ENCODE measurements at regions of chr6 and their contacts with region 1.

Region 1: GRCh38 chr6:31827286-31828079 is at the start of gene HSPA1B:
- DNase-seq: peak; percentile 99
- ATAC-seq: peak; percentile 78
- H3K4me3 Mint-ChIP-seq: peak within 1 kb of the TSS; percentile 86
- H3K27ac Mint-ChIP-seq: peak within 1 kb of the TSS; percentile 93
- H3K4me1 Mint-ChIP-seq: peaks cover 53% of the 10 kb centered on the region
- H3K27me3 Mint-ChIP-seq: no peaks in the 10 kb centered on the region
- total RNA-seq, gene HSPA1B: 84.6 to 87.1 TPM

Region 2: DNA sequence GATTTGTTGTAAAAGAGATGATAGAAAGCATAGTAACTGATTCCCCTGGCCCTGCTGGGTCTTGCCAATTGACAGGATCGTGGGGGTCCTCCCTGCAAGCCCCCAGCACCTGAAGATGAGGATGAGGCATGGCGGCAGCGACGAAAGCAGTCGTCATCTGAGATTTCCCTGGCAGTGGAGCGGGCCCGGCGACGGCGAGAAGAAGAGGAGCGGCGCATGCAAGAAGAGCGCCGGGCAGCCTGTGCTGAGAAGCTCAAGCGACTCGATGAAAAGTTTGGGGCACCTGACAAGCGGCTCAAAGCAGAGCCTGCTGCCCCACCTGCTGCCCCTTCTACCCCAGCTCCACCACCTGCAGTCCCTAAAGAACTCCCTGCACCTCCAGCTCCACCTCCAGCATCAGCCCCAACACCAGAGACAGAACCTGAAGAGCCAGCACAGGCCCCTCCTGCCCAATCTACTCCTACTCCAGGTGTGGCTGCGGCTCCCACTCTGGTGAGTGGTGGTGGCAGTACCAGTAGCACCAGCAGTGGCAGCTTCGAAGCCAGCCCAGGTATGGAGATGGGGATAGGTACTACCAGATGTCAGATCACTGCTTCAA is 199.7 kb before region 1 on chr6:
- CTCF ChIA-PET with region 1: no interaction called
- POLR2A ChIA-PET with region 1: no interaction called
- DNase-seq: no peak
- ATAC-seq: no peak
- H3K4me3 Mint-ChIP-seq: no peak overlapping the region
- H3K27ac Mint-ChIP-seq: peak overlapping the region; percentile 27
- H3K4me1 Mint-ChIP-seq: peaks cover 14% of the 10 kb centered on the region
- H3K27me3 Mint-ChIP-seq: no peaks in the 10 kb centered on the region

Region 3: GRCh38 chr6:31652925-31653718 is 174.4 kb before region 1 on chr6:
- CTCF ChIA-PET with region 1: interaction called, 5 read pairs
- POLR2A ChIA-PET with region 1: interaction called, 14 read pairs
- DNase-seq: peak; percentile 93
- ATAC-seq: peak; percentile 72
- H3K4me3 Mint-ChIP-seq: peak overlapping the region; percentile 96
- H3K27ac Mint-ChIP-seq: peak overlapping the region; percentile 98
- H3K4me1 Mint-ChIP-seq: peaks cover 66% of the 10 kb centered on the region
- H3K27me3 Mint-ChIP-seq: no peaks in the 10 kb centered on the region

Region 4: DNA sequence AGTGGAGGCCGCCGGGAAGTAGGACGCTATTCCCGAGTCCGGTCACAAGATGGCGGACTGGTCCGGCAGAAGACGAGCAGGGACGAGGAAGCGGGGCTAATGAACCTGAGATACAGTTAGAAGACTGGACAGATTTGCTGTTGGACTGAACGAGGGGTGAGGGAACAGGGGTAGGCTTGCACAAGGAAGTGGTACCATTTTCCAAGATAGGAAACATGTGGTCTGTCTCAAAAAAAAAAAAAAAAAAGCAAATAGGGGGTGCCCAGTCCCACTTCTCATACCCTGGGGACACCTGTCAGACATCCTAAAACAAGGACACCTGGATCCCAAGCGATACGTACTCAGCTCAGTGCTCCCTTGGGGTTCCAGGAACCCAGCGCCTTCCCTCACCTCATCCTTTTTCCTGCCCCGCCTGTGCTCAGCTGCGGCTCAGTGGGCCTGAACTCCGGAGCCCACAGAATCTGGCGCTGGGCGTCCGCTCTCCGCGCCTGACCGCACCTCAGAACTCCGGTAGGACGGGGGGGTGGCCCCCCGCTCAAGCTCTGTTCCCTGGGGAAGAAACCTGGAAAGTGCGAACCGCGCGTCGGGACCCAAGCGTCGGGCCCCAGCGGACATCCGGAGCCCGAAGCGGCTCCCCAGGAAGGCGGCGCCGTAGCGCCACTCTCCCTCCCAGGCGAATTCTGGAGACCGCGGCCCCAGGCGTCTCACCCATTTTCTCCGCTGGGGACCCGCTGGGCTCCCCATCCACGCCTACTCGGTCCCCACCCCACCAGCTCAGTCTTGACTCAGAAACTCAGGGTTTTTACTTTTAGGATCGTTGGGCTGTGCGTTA is 146.4 kb before region 1 on chr6 and contains the start of gene LY6G5C:
- CTCF ChIA-PET with region 1: interaction called, 25 read pairs
- POLR2A ChIA-PET with region 1: no interaction called
- DNase-seq: peak; percentile 76
- ATAC-seq: peak; percentile 77
- H3K4me3 Mint-ChIP-seq: peak within 1 kb of the TSS; percentile 62
- H3K27ac Mint-ChIP-seq: peak within 1 kb of the TSS; percentile 58
- H3K4me1 Mint-ChIP-seq: peaks cover 43% of the 10 kb centered on the region
- H3K27me3 Mint-ChIP-seq: no peaks in the 10 kb centered on the region
- total RNA-seq, gene LY6G5C: 4.3 to 5.5 TPM

Region 5: GRCh38 chr6:31769684-31770371 is 57.7 kb before region 1 on chr6:
- CTCF ChIA-PET with region 1: interaction called, 13 read pairs
- POLR2A ChIA-PET with region 1: no interaction called
- DNase-seq: peak; percentile 88
- ATAC-seq: peak; percentile 88
- H3K4me3 Mint-ChIP-seq: no peak overlapping the region
- H3K27ac Mint-ChIP-seq: peak overlapping the region; percentile 60
- H3K4me1 Mint-ChIP-seq: peaks cover 49% of the 10 kb centered on the region
- H3K27me3 Mint-ChIP-seq: no peaks in the 10 kb centered on the region

Region 6: GRCh38 chr6:31815025-31815838 is 12.3 kb before region 1 on chr6 and contains the starts of genes HSPA1A and HSPA1L:
- CTCF ChIA-PET with region 1: interaction called, 16 read pairs
- POLR2A ChIA-PET with region 1: interaction called, 13 read pairs
- DNase-seq: peak; percentile 82
- ATAC-seq: peak; percentile 29
- H3K4me3 Mint-ChIP-seq: peak within 1 kb of the TSS; percentile 89
- H3K27ac Mint-ChIP-seq: peak within 1 kb of the TSS; percentile 90
- H3K4me1 Mint-ChIP-seq: peaks cover 47% of the 10 kb centered on the region
- H3K27me3 Mint-ChIP-seq: no peaks in the 10 kb centered on the region
- total RNA-seq, gene HSPA1A: 75.6 to 75.7 TPM
- total RNA-seq, gene HSPA1L: 3.0 to 3.1 TPM

Region 7: GRCh38 chr6:31922942-31923341 is 95.5 kb after region 1 on chr6:
- CTCF ChIA-PET with region 1: no interaction called
- POLR2A ChIA-PET with region 1: no interaction called
- DNase-seq: peak; percentile 42
- ATAC-seq: no peak
- H3K4me3 Mint-ChIP-seq: no peak overlapping the region
- H3K27ac Mint-ChIP-seq: no peak overlapping the region
- H3K4me1 Mint-ChIP-seq: no peaks in the 10 kb centered on the region
- H3K27me3 Mint-ChIP-seq: peaks cover 2% of the 10 kb centered on the region

Region 8: GRCh38 chr6:32047850-32048766 is 220.6 kb after region 1 on chr6:
- CTCF ChIA-PET with region 1: no interaction called
- POLR2A ChIA-PET with region 1: no interaction called
- DNase-seq: peak; percentile 74
- ATAC-seq: peak; percentile 80
- H3K4me3 Mint-ChIP-seq: no peak overlapping the region
- H3K27ac Mint-ChIP-seq: no peak overlapping the region
- H3K4me1 Mint-ChIP-seq: peaks cover 2% of the 10 kb centered on the region
- H3K27me3 Mint-ChIP-seq: no peaks in the 10 kb centered on the region